ENCODE measurements at regions of chr9 and their contacts with region 1.

Region 1: DNA sequence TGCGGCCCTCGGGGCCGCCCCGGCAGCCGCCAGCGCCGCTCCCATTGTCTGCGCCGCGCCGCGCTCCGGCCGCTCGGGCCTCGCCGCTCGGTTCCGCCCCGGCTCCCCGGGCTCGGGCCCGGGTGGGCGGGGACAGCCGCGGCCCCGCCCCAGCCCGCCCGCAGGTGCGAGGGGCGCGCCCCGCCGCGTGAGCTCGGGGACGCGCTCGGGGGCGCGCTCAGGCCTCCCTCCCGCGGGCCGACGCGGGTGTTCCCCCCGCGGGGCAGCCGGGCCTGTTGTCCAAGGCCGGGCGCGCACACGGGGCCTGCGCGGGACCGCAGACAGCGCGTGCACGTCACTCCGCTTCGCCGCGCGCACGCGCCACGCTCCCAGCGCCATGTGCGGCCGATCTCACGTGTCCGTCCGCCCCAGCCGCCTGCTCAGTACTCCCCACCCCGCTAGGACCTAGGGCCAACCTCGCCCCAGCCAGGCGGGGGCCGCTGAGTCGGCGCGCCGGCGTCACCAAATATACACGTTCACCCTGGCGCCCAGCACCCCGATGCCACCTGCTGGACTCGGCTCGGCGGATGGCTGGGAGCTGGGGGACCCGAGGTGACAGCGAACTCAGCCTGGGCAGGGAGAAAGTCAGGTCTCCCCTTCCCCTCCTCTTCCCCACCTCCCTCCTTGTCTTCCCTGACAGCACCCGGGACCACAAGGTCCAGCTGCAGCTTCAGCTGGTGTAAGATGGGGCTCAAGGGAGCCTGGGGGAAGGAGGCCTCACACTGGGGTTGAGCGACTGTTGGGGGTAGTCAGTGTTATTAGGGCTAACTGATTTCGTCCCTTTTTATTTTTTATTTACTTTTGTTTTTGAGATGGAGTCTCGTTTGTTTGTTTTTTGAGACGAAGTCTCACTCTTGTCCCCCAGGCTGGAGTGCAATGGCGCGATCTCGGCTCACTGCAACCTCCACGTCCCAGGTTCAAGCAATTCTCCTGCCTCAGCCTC is 14.3 kb downstream of the GBGT1 start:
- DNase-seq: peak; percentile 92 to 96 (median 94)
- H3K4me3 ChIP-seq: peak overlapping the region in 1 of 4 donors; percentile 52
- H3K27ac ChIP-seq: peak overlapping the region; percentile 66 to 93 (median 86)
- H3K4me1 ChIP-seq: peaks cover 23 to 26% of the 10 kb centered on the region in 2 donors
- H3K27me3 ChIP-seq: no peaks in the 10 kb centered on the region
- CTCF ChIP-seq: peak in 3 of 6 experiments; percentile 27 to 46 (median 31)
- POLR2A ChIP-seq: peak in 1 of 2 donors; percentile 84

Region 2: GRCh38 chr9:133030317-133031129 is 118.9 kb before region 1 on chr9 and contains the start of gene GTF3C5:
- intact Hi-C with region 1: loop called in 1 of 2 experiments (anchors 5 kb)
- DNase-seq: peak; percentile 92 to 97 (median 94)
- H3K4me3 ChIP-seq: peak within 1 kb of the TSS; percentile 75 to 96 (median 81)
- H3K27ac ChIP-seq: peak within 1 kb of the TSS; percentile 72 to 89 (median 83)
- H3K4me1 ChIP-seq: peaks cover 21 to 40% of the 10 kb centered on the region in 2 donors
- H3K27me3 ChIP-seq: no peaks in the 10 kb centered on the region
- CTCF ChIP-seq: peak in 2 of 6 experiments; percentile 24 to 32
- POLR2A ChIP-seq: peak; percentile 69 to 91
- total RNA-seq, gene GTF3C5: 43.9 to 111 (median 57.5) TPM

Region 3: GRCh38 chr9:133238851-133239532 is 89.6 kb after region 1 on chr9:
- intact Hi-C with region 1: no loop called
- DNase-seq: peak; percentile 81 to 92 (median 88)
- H3K4me3 ChIP-seq: peak overlapping the region in 2 of 4 donors; percentile 18 to 47
- H3K27ac ChIP-seq: peak overlapping the region in 4 of 5 donors; percentile 22 to 85 (median 66)
- H3K4me1 ChIP-seq: peaks cover 0 to 7% of the 10 kb centered on the region in 2 donors
- H3K27me3 ChIP-seq: no peaks in the 10 kb centered on the region
- CTCF ChIP-seq: peak; percentile 76 to 96 (median 88)
- POLR2A ChIP-seq: no peak

Region 4: DNA sequence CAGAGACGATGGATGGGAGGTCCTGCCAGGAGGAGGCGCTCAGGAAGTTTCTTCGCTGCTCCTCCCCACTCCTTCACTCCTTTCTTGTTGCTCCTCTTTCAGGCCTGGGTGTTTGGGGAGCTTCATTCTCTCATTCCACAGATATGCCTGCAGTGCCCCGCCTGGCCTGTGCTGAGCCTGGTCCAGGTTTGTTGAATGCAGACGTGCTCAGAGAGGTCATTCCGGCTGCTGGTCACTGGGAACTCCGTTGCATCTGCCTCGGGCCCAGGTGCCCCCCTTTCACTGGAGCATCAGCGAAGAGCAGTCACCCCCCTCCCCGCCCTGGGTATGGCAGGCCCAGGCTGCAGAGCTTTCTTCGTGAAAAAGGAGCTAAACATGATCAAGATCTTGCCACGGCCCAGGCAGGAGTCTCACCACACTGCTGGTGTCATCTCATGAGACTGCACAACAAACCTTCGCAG is 171.0 kb after region 1 on chr9:
- intact Hi-C with region 1: no loop called
- DNase-seq: no peak
- H3K4me3 ChIP-seq: no peak overlapping the region
- H3K27ac ChIP-seq: no peak overlapping the region
- H3K4me1 ChIP-seq: no peaks in the 10 kb centered on the region
- H3K27me3 ChIP-seq: no peaks in the 10 kb centered on the region
- CTCF ChIP-seq: no peak
- POLR2A ChIP-seq: no peak